H1 (cell line): ENCODE measurements at regions of chr1 and their contacts with region 1.

Region 1: GRCh38 chr1:9867408-9868243 is 42.4 kb downstream of the CTNNBIP1 start:
- DNase-seq: peak; percentile 56 to 99
- H3K4me3 ChIP-seq: no peak overlapping the region
- H3K27ac ChIP-seq: no peak overlapping the region
- H3K4me1 ChIP-seq: no peaks in the 10 kb centered on the region; a peak in 2 of 7 replicates
- H3K27me3 ChIP-seq: no peaks in the 10 kb centered on the region
- CTCF ChIP-seq: peak; percentile 97 to 100 (median 99)
- EP300 ChIP-seq: no peak
- POLR2A ChIP-seq: no peak
- RAD21 ChIP-seq: peak; percentile 99

Region 2: DNA sequence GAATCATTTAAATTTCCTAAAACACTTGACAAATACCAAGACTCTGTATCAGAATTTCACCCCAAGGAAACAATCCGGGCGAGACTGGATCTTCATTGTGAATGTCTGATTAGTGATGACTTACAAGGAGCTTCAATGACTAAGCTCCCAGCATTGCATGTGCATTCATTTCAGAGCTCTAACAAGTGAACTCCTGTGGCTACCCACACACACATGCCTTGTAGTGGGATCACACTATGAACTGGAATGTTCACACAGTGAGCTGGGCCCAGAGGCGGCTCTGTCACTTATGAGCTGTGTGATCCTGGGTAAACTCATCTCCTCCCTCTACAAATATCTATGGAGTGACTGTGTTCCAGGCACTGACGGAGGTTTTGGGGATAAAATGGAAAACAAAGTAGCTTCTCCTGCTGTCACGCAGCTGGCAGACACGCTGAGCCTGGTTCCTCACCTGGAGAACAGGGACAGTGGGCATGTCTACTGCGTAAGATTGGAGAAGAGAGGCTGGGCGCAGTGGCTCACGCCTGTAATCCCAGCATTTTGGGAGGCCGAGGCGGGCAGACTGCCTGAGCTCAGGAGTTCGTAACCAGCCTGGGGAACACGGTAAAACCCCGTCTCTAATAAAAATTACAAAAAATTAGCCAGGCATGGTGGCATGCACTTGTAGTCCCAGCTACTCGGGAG is 100.7 kb before region 1 on chr1:
- CTCF ChIA-PET with region 1: interaction called, 11 read pairs
- POLR2A ChIA-PET with region 1: no interaction called
- DNase-seq: no peak
- H3K4me3 ChIP-seq: no peak overlapping the region
- H3K27ac ChIP-seq: no peak overlapping the region
- H3K4me1 ChIP-seq: peaks cover 0 to 8% (median 1%) of the 10 kb centered on the region in 4 experiments; a peak in 5 of 7 replicates
- H3K27me3 ChIP-seq: no peaks in the 10 kb centered on the region
- CTCF ChIP-seq: no peak
- EP300 ChIP-seq: no peak
- POLR2A ChIP-seq: no peak
- RAD21 ChIP-seq: no peak

Region 3: DNA sequence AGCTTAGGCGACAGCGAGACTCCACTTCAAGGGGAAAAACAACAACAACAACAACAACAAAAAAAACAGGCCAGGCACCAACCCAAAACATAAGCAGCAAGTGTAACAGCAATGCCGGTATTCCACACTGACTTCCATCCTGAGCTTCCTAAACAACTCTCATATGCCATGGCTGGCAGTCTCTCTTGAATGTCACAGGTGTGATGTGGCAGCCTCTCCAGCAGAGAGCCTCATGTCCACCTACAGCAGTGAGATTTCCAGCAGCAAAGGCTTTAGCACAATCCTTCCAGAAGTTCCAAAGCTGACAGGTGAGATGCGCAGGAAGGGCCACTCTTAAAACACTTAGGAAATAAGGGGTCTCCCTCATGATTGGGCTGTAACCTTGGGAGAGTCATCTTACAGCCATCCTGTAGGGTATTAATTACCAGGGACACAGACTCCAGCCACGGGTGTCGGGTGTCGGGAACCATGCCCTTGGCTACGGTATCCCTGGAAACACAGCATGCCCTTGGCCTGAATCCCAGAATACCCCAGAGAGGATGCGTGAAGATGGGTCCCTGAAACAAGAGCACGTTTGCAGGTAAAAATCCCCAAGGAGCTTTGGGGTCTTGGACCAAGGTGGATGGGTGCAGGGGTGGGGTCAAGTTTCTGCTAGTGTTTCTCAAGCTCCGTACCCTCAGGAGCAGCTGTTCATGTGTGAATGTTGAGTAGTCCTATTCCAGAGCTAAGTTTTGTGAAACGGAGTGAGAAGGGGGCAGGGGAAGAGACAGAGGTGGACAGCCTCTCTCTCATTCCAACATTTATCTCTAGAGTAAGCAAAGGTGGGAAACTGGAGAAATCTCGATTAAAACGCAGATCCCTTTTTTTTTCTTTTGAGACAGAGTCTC is 75.2 kb before region 1 on chr1:
- CTCF ChIA-PET with region 1: interaction called, 312 read pairs
- POLR2A ChIA-PET with region 1: interaction called, 3 read pairs
- DNase-seq: peak in 1 of 2 experiments; percentile 72
- H3K4me3 ChIP-seq: no peak overlapping the region
- H3K27ac ChIP-seq: no peak overlapping the region
- H3K4me1 ChIP-seq: peaks cover 3 to 23% (median 11%) of the 10 kb centered on the region in 4 experiments
- H3K27me3 ChIP-seq: no peaks in the 10 kb centered on the region
- CTCF ChIP-seq: peak; percentile 2 to 37 (median 5); a peak in 2 of 4 replicates
- EP300 ChIP-seq: no peak
- POLR2A ChIP-seq: no peak
- RAD21 ChIP-seq: peak in 1 of 2 experiments; percentile 27; a peak in 1 of 4 replicates

Region 4: GRCh38 chr1:9852410-9853248 is 15.0 kb before region 1 on chr1:
- CTCF ChIA-PET with region 1: interaction called, 63 read pairs
- POLR2A ChIA-PET with region 1: no interaction called
- DNase-seq: no peak
- H3K4me3 ChIP-seq: no peak overlapping the region
- H3K27ac ChIP-seq: no peak overlapping the region
- H3K4me1 ChIP-seq: peaks cover 3 to 11% (median 8%) of the 10 kb centered on the region in 4 experiments
- H3K27me3 ChIP-seq: no peaks in the 10 kb centered on the region
- CTCF ChIP-seq: no peak
- EP300 ChIP-seq: no peak
- POLR2A ChIP-seq: no peak
- RAD21 ChIP-seq: no peak

Region 5: DNA sequence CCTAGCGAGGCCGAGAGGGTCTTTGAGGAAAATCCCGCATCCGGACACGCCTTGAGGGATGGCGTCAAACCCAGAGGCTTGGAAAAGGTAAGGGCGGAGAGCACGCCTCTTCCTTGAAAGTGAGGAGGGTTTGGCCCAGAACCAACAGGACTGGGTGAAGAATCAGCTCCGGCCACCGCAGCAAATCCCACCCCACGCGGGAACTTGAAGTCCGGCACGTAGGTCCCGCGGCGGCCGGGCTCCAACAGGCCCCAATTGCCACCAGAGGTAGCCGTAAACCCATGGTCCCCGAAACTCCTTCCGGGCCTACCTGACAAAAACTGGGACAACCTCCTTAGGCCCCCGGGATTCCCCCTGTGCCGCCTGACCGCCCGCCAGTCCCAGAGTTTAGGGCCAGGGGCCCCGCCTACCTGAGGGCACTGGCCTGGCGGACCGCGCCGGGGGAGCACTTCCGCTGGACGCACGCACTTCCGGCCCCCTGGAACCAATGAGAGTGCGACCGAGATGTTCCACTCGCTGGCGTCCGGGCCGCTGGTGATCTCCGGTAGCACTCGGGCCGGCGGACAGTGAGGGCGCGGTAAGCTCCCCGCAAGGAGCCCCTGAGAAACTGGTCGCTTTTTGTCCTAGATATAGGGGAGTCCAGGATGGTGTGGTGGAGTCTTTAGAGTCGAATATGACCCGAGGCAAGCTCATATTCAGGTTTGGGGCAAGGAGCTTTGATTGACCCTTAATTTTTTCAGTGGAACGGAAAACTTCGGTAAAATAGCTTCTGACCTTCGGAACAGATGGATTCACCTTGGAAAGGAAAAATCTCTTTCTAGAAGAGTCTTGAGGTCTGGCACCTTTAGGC is 75.5 kb after region 1 on chr1 and contains the starts of genes LZIC and NMNAT1:
- CTCF ChIA-PET with region 1: interaction called, 55 read pairs
- POLR2A ChIA-PET with region 1: interaction called, 6 read pairs
- DNase-seq: peak; percentile 81 to 94
- H3K4me3 ChIP-seq: peak within 1 kb of the TSS; percentile 72 to 94 (median 88)
- H3K27ac ChIP-seq: peak within 1 kb of the TSS; percentile 76
- H3K4me1 ChIP-seq: no peaks in the 10 kb centered on the region
- H3K27me3 ChIP-seq: no peaks in the 10 kb centered on the region
- CTCF ChIP-seq: peak in 1 of 3 experiments; percentile 15; a peak in 1 of 4 replicates
- EP300 ChIP-seq: peak in 1 of 2 experiments; percentile 68; a peak in 1 of 3 replicates
- POLR2A ChIP-seq: peak; percentile 73 to 94
- RAD21 ChIP-seq: peak in 1 of 2 experiments; percentile 15; a peak in 1 of 4 replicates
- total RNA-seq, gene LZIC: 20.0 and 20.3 TPM in 2 replicates
- total RNA-seq, gene NMNAT1: 2.0 and 2.5 TPM in 2 replicates